ENCODE measurements at regions of chr3 and their contacts with region 1.

Region 1: DNA sequence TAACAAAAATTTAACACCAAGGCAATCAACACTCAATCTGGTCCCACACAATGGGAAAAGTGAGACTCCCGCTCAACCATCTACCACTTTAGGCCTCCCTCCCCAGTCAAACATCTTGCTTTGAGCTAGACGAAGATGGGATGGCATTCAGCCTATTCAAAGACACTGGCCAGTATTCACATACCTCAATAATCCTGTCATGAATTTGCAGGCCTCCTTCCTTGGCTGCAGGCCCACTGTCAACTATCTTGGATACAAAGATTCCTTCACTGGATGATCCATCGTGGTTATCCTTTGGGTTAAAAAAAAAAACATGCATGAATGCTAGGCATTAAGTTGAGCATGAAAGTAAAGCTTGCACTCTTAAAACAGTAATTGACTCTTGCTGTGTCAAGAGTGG is 22.6 kb downstream of the PDZRN3 start:
- DNase-seq: peak; percentile 94
- ATAC-seq: peak; percentile 56
- H3K4me3 ChIP-seq: no peak overlapping the region
- H3K27ac ChIP-seq: no peak overlapping the region
- H3K4me1 ChIP-seq: peaks cover 16% of the 10 kb centered on the region
- H3K27me3 ChIP-seq: no peaks in the 10 kb centered on the region
- CTCF ChIP-seq: no peak
- POLR2A ChIP-seq: no peak
- RAD21 ChIP-seq: no peak

Region 2: DNA sequence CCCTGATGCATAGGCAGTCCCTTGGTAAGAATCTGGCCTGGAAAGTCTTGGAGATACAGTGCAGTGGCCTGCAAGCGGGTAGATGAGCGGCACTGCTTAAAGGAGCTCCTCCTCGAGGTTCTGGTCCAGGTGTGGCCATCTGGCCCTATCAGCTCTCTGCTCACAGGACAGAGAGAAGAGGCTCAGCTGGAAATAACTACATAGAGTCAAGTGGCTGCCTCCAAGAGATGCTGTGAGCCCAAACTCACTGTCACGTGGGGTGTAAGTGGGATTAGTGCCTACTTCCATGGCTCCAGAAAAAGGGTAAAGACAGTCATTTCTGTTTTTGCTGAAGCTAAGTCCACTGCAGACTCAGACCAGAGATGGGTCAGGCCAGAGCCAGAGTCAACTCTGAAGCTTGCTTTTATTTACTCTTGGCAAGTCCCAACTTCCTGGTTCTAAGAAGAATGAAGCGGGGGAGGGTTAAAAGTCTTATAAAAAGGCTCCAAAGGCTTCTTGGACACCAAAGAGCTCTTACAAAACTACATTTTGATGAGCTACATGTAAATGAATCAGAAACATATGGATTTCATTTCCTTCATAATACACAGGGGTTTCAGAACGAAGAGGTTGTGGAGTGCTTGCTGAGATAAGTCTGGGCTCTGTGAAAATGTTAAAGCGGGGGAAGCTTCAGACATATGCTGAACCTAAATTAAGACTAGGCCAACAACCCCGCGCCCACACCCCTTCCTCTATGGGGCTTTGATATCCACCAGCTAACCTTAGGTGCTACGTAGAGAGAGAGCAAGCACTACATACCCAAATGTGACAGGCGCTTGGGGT is 54.5 kb before region 1 on chr3:
- CTCF ChIA-PET with region 1: no interaction called
- POLR2A ChIA-PET with region 1: no interaction called
- dilution Hi-C with region 1: no loop called
- in situ Hi-C with region 1: no loop called
- intact Hi-C with region 1: loop called (anchors 1 kb)
- DNase-seq: peak; percentile 94
- ATAC-seq: peak; percentile 73
- H3K4me3 ChIP-seq: no peak overlapping the region
- H3K27ac ChIP-seq: peak overlapping the region; percentile 90
- H3K4me1 ChIP-seq: peaks cover 19% of the 10 kb centered on the region
- H3K27me3 ChIP-seq: no peaks in the 10 kb centered on the region
- CTCF ChIP-seq: no peak
- POLR2A ChIP-seq: no peak
- RAD21 ChIP-seq: no peak

Region 3: DNA sequence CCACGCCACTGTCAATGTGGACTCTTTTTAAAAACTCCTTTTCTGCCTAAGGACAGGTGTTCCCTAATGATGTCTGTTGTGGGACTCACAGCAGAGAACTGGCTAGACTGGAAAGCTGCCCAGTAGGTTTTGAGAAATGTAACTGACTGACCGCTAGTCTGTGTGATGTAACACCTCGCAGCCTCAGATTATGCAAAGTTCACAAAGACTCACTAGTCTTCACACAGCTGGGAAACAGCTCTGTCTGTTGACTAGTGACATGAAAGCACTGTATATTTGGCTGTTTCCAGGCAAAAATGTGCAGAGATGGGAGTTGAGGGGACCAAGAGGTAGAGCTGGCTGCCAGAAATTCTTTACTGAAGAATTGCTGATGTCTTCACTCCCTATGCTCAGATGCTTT is 12.2 kb after region 1 on chr3:
- CTCF ChIA-PET with region 1: interaction called, 12 read pairs
- POLR2A ChIA-PET with region 1: no interaction called
- dilution Hi-C with region 1: no loop called
- in situ Hi-C with region 1: no loop called
- intact Hi-C with region 1: no loop called
- DNase-seq: peak; percentile 91
- ATAC-seq: peak; percentile 69
- H3K4me3 ChIP-seq: no peak overlapping the region
- H3K27ac ChIP-seq: no peak overlapping the region
- H3K4me1 ChIP-seq: peaks cover 4% of the 10 kb centered on the region; the same call in 1 of the 2 replicates
- H3K27me3 ChIP-seq: no peaks in the 10 kb centered on the region
- CTCF ChIP-seq: no peak
- POLR2A ChIP-seq: no peak
- RAD21 ChIP-seq: 0 out of 2 replicates have a peak, but pooled peaks have one; percentile 12

Region 4: GRCh38 chr3:74267588-74268184 is 665.5 kb after region 1 on chr3:
- CTCF ChIA-PET with region 1: no interaction called
- POLR2A ChIA-PET with region 1: no interaction called
- dilution Hi-C with region 1: no loop called
- in situ Hi-C with region 1: no loop called
- intact Hi-C with region 1: no loop called
- DNase-seq: peak; percentile 63
- ATAC-seq: peak; percentile 81
- H3K4me3 ChIP-seq: no peak overlapping the region
- H3K27ac ChIP-seq: no peak overlapping the region
- H3K4me1 ChIP-seq: no peaks in the 10 kb centered on the region; the same call in 1 of the 2 replicates
- H3K27me3 ChIP-seq: no peaks in the 10 kb centered on the region
- CTCF ChIP-seq: peak; percentile 63
- POLR2A ChIP-seq: no peak
- RAD21 ChIP-seq: peak; percentile 60